ENCODE measurements at regions of chr3 and their contacts with region 1.

Region 1: GRCh38 chr3:98593046-98593936 is at the start of gene CPOX:
- DNase-seq: peak; percentile 95
- ATAC-seq: peak; percentile 98
- H3K4me3 ChIP-seq: peak within 1 kb of the TSS; percentile 75
- H3K27ac ChIP-seq: peak within 1 kb of the TSS; percentile 83
- H3K4me1 ChIP-seq: peaks cover 7% of the 10 kb centered on the region
- H3K27me3 ChIP-seq: no peaks in the 10 kb centered on the region
- CTCF ChIP-seq: no peak
- total RNA-seq, gene CPOX: 15.8 TPM

Region 2: DNA sequence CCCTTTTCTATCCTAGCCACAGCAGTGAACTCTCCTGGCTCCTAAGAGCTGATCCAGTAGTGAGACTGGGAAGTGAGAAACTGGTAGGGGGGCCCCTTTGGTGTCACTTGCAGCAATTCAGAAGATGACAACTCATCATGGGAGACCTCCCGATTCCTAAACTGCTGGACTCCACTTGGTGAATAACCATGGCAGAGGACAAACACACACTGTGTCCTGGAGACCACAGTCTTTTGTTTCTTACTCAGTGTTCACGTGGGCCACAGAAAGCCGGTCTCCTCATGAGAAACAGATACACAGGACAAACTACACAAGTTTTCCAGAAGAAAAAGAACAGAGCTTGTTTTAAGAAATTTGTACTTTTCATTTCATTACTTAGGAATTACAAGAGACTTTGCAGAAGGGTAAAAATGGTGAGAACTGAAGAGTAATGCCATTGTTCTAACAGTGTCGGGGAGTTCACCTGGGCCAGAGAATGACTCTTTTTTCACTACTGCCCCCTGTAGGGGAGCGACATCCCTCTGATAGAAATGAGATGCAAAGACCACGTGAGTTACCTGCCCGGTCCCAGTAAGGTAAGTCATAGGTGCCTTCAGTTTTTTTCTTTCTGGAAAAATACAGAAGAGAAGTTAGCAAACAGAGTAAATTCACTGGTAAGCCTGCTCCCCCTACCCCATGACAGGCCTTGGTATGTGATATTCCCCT is 207.9 kb after region 1 on chr3:
- intact Hi-C with region 1: loop called (anchors 10 kb)
- DNase-seq: no peak
- ATAC-seq: no peak
- H3K4me3 ChIP-seq: no peak overlapping the region
- H3K27ac ChIP-seq: no peak overlapping the region
- H3K4me1 ChIP-seq: no peaks in the 10 kb centered on the region
- H3K27me3 ChIP-seq: no peaks in the 10 kb centered on the region
- CTCF ChIP-seq: no peak

Region 3: DNA sequence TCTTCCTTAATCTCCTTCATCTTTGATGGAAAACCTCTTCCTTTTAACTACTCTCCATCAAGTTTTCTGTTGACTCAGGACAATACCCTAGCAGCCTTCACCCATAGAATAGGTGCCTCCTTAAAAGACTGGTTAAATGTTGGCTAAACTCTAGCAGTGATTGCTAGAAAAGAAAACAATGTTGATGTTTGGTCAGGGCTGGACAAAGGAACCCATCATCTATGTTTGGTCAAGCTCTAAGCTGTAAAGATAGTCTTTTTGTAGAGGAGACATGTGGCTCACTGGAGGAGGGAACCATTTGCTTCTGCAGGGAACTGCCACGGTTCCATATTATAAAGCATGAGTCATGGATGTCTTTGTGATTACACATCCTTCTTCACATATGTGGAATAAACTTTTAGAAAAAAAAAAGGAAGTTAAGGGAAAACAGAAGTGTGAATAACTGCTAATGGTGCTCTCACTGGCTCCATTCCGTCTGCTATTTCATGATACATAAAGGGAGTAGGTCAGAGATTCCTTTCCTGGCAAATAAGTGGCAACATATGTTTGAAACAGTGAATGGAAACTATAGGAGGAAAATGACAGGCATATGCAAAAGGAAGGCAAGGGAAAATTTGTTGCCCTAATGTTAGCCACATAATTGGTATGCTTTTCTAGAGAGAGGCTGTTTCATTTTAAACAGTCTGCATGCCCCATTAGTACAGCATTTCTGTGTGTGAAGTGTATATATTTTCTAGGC is 1302.6 kb after region 1 on chr3:
- intact Hi-C with region 1: no loop called
- DNase-seq: no peak
- ATAC-seq: peak; percentile 84
- H3K4me3 ChIP-seq: no peak overlapping the region
- H3K27ac ChIP-seq: peak overlapping the region; percentile 52
- H3K4me1 ChIP-seq: peaks cover 3% of the 10 kb centered on the region
- H3K27me3 ChIP-seq: no peaks in the 10 kb centered on the region
- CTCF ChIP-seq: no peak